ENCODE measurements at regions of chr12 and their contacts with region 1.

Region 1: DNA sequence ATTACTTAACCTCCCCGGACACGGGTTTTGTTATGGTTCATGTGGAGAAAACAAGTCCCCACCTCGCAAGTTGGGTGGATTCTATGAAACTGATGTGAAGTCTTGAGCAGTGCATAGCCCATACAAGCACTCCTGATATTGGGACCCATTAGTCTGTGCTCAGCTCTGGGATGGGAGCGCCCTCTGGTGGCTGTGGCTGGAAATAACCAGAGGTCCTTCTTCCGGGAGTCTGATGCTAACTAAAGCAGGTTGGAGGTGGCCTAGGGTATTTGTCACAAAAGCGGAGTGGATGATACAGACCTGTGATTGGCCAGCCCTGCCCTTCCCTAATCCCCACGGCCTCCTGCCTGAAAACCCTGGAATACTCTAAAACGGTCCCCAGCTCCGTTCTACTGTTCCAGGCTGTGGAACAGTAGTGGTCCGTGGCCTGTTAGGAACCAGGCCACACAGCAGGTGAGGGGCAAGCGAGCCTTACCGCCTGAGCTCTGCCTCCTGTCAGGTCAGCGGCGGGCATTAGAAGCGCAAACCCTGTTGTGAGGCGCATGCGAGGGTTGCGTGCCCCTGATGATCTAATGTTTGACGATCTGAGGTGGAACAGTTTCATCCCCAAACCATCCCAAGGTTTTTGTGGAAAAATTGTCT is 6.4 kb downstream of the SLC48A1 start:
- DNase-seq: peak; percentile 23
- H3K4me3 ChIP-seq: no peak overlapping the region
- H3K27me3 ChIP-seq: no peaks in the 10 kb centered on the region
- CTCF ChIP-seq: peak; percentile 94

Region 2: DNA sequence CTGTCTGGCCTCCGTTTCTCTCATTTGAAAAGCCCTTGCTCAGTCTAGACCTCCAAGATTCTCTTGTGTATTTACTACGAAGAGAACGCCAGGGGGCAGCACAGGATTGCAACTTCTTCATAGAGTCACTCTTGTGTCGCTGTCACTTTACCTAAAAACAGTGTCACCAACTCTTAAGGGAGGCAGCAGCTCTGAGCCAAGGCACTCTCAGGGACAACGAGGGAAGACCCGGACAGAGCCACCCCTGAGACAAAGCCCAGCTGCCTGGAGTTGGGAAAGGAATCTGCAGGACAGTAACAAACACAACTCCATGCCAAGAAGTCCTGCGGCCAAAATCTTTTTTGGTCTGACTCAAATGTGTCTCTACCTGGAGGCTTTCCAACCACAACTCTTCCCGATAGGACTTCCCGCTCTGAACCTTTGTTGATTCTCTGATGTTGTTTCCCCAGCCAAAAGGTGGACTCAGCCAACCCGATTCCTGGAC is 64.0 kb before region 1 on chr12:
- CTCF ChIA-PET with region 1: interaction called, 387 read pairs
- POLR2A ChIA-PET with region 1: no interaction called
- DNase-seq: no peak
- H3K4me3 ChIP-seq: no peak overlapping the region
- H3K27me3 ChIP-seq: no peaks in the 10 kb centered on the region
- CTCF ChIP-seq: peak; percentile 80

Region 3: GRCh38 chr12:47758834-47759690 is 20.4 kb before region 1 on chr12 and contains the start of gene RAPGEF3:
- CTCF ChIA-PET with region 1: interaction called, 82 read pairs
- POLR2A ChIA-PET with region 1: interaction called, 3 read pairs
- DNase-seq: no peak
- H3K4me3 ChIP-seq: peak within 1 kb of the TSS; percentile 53
- H3K27me3 ChIP-seq: no peaks in the 10 kb centered on the region
- CTCF ChIP-seq: peak; percentile 65
- polyA plus RNA-seq, gene RAPGEF3: 1.3 and 2.4 TPM in 2 replicates

Region 4: DNA sequence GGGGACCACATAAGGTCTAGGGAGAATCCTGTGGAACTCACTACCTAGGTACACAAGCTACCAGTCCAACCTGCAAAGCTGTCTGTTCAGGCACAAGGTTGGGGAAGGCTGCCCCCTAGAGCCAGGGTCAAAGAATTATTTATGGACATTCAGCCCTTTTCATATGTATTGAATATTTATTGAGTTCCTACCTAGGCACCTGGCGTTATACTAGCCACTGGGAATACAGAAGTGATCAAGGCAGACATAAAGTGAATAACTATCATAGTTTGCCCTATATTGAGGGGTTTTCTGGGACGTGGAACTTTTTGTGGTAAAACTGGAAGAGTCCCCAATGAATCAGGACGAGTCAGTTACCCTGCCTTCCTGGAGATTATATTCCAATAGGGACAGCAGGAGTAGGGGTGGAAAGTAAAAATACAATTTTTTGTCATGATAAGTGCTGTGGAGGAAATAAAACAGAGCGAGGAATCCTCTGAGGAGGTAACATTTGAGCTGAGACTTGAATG is 12.2 kb before region 1 on chr12:
- CTCF ChIA-PET with region 1: interaction called, 33 read pairs
- POLR2A ChIA-PET with region 1: no interaction called
- DNase-seq: no peak
- H3K4me3 ChIP-seq: no peak overlapping the region
- H3K27me3 ChIP-seq: no peaks in the 10 kb centered on the region; the same call in 1 of the 2 replicates
- CTCF ChIP-seq: peak; percentile 59

Region 5: GRCh38 chr12:47793015-47793681 is 13.7 kb after region 1 on chr12:
- CTCF ChIA-PET with region 1: interaction called, 49 read pairs
- POLR2A ChIA-PET with region 1: no interaction called
- DNase-seq: no peak
- H3K4me3 ChIP-seq: no peak overlapping the region
- H3K27me3 ChIP-seq: no peaks in the 10 kb centered on the region
- CTCF ChIP-seq: no peak

Region 6: GRCh38 chr12:47812797-47813510 is 33.5 kb after region 1 on chr12:
- CTCF ChIA-PET with region 1: interaction called, 10 read pairs
- POLR2A ChIA-PET with region 1: no interaction called
- DNase-seq: peak; percentile 59
- H3K4me3 ChIP-seq: peak overlapping the region; percentile 18
- H3K27me3 ChIP-seq: no peaks in the 10 kb centered on the region
- CTCF ChIP-seq: no peak

Region 7: DNA sequence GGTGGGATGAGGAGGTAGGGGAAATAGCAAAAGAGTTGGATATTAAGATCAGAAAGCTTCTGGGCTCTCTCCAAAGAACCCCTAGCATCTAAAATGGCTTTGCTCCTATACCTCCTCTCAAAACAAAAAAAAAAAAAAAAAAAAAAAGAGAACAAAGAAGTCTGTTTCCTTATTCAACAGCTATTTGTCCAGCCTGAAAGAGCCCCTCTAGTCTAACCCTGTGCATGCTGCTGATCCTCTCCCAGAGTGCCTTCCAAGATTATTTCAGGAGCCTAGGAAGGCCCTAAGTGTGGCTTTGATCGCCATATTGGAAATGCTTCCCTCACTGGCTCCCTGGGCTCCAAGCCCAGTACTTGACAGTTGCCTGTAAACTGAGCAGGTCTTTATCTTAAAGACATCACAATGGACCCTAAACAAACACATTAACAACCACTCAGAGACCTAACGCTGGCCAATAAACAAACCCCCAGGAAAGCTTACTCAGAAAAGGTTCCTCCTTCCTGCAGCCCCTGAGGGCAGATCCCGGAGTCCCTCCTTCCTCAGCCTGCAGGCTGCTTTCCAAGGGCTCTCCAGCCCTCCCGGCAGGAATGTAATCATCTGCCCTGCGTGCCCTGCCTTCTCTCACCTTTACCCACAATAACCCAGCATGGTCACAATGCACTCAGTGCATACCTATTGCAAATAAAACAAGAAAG is 242.2 kb after region 1 on chr12:
- CTCF ChIA-PET with region 1: no interaction called
- POLR2A ChIA-PET with region 1: no interaction called
- DNase-seq: no peak
- H3K4me3 ChIP-seq: no peak overlapping the region
- H3K27me3 ChIP-seq: peaks cover 33% of the 10 kb centered on the region
- CTCF ChIP-seq: no peak

Measured in BJ (cell line).